A673 (cell line): ENCODE measurements at regions of chr18 and their contacts with region 1.

Region 1: GRCh38 chr18:55234366-55235093 is 275.3 kb upstream of the CCDC68 start:
- DNase-seq: peak; percentile 91
- H3K4me3 ChIP-seq: peak overlapping the region; percentile 3
- H3K27ac ChIP-seq: peak overlapping the region; percentile 19
- H3K4me1 ChIP-seq: peaks cover 32% of the 10 kb centered on the region
- H3K27me3 ChIP-seq: no peaks in the 10 kb centered on the region
- CTCF ChIP-seq: peak; percentile 83

Region 2: DNA sequence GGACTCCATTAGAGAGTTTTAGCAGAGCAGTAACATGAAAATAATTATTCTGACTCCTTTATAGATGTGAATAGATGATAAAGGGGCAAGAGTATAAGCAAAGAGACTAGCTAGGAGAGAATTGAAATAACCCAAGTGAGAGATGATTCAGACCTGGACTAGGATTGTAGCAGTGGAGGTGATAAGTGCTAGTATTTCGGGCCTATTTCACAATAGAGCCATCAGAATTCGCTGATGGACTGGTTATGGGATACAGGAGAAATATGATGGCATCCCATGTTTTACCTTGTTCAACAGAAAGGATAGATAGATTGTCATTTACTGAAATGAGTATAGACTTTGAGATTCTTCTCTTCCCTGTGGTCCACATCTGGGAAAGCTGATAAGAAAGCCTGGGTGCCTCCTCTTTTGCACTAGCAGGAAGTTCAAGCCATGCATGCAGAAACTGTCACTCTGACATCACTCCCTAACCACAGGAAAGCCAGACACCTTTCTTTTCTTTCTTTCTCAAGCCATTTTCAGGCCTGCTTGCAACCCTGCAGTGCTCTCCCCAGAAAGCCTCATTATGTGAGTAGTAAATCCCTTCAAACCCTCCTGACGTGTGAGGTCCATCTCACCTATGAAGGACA is 618.2 kb before region 1 on chr18:
- CTCF ChIA-PET with region 1: no interaction called
- POLR2A ChIA-PET with region 1: no interaction called
- intact Hi-C with region 1: no loop called
- DNase-seq: no peak
- H3K4me3 ChIP-seq: no peak overlapping the region
- H3K27ac ChIP-seq: no peak overlapping the region
- H3K4me1 ChIP-seq: no peaks in the 10 kb centered on the region
- H3K27me3 ChIP-seq: no peaks in the 10 kb centered on the region
- CTCF ChIP-seq: no peak

Region 3: DNA sequence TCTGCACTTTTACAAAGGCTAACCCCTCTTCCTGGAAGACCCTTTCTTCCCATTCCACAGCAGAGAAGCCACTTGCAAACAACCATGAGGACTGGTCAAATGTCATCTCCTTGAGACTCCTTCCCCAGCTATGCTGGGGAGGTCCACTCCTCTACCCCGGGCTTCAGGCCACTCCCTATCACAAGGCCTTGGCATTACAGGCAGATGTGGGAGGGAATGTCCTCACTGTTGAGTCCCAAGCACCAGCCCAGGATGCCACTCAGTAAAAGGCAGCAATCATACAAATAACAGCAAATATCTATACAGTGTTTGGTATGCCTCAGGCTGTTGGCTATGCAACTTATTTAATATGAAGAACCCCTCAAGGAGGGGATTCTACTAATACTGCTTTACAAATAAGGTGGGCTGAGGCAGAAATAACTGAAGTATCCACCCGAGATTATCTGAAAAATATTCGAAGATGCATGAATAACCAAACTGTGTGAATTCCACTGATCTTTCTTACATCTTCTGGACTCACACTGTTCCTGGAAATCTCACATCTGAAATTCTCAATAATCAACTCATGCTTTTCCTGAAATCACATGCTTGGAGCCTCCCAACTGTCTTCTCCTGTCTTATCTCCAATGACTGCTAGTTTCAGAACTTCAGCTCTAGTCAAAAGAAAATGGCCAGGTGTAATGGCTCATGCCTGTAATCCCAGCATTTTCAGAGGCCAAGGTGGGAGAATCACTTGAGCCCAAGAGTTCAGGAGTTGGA is 127.1 kb after region 1 on chr18:
- CTCF ChIA-PET with region 1: no interaction called
- POLR2A ChIA-PET with region 1: no interaction called
- intact Hi-C with region 1: loop called (anchors 1 kb)
- DNase-seq: peak; percentile 85
- H3K4me3 ChIP-seq: no peak overlapping the region
- H3K27ac ChIP-seq: peak overlapping the region; percentile 89
- H3K4me1 ChIP-seq: peaks cover 68% of the 10 kb centered on the region
- H3K27me3 ChIP-seq: no peaks in the 10 kb centered on the region
- CTCF ChIP-seq: no peak

Region 4: DNA sequence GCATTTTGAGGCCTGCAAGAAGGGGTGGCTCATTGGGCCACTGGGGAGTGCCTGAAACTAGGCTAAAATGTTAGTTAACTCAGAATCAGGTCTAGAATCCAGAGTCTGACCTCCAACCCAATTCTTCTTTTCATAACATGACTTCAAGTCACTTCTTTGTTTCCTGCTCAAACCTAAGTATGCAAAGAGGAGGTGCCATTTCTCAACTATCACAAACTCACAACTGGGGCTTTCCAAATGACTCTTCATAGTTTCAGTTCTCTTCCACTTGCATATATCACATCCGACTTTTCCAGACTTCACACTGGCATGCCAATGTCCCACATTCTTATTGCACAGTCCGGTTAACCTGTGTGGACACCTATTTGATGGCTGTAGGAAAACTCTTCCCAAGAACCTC is 141.9 kb after region 1 on chr18:
- CTCF ChIA-PET with region 1: no interaction called
- POLR2A ChIA-PET with region 1: no interaction called
- intact Hi-C with region 1: no loop called
- DNase-seq: no peak
- H3K4me3 ChIP-seq: no peak overlapping the region
- H3K27ac ChIP-seq: no peak overlapping the region
- H3K4me1 ChIP-seq: peaks cover 8% of the 10 kb centered on the region
- H3K27me3 ChIP-seq: no peaks in the 10 kb centered on the region
- CTCF ChIP-seq: no peak